Pancreas (tissue), 10 donors: ENCODE measurements at regions of chr4 and their contacts with region 1.

Region 1: DNA sequence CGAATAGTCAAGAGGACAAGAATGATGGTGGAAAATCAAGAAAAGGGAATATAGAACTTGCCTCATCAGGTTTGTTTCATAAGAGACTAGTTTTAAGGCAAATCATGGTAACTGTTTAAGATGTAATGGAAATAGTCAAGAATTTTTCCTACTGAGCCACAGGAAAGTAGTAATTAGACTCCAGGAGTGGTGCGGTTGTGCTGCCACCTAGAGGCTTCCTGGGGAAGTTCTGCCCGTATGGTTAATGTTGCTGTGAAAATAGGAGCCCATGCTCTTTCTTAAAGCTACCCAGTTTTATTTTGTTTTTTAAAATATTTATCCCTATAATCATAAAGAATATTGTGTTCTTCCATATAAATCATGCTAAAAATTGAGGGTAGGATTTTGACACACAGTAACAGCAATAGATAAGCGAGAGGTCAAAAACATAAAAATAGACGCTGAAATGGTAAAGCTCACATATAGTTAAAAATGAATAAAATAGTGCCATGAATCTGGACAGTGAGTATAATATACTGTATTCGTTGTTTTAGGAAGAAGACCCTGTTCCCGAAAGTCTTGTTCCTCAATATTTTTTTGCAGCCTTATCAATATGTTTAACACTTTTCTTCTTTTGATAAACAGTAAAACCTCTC is 87.0 kb downstream of the PHOX2B start:
- DNase-seq: peak in 5 of 6 donors; percentile 18 to 74 (median 45)
- ATAC-seq: peak; percentile 50 to 92 (median 89)
- H3K4me3 ChIP-seq: no peak overlapping the region
- H3K27ac ChIP-seq: no peak overlapping the region
- H3K4me1 ChIP-seq: no peaks in the 10 kb centered on the region
- H3K27me3 ChIP-seq: peaks cover 0 to 6% (median 0%) of the 10 kb centered on the region in 4 donors
- CTCF ChIP-seq: peak; percentile 87 to 95 (median 92)

Region 2: GRCh38 chr4:41281038-41281634 is 380.4 kb before region 1 on chr4:
- intact Hi-C with region 1: loop called in 2 of 3 experiments (anchors 5 to 10 kb)
- DNase-seq: peak in 3 of 6 donors; percentile 25 to 50 (median 26)
- ATAC-seq: peak; percentile 91 to 99 (median 98)
- H3K4me3 ChIP-seq: no peak overlapping the region
- H3K27ac ChIP-seq: no peak overlapping the region
- H3K4me1 ChIP-seq: no peaks in the 10 kb centered on the region
- H3K27me3 ChIP-seq: no peaks in the 10 kb centered on the region
- CTCF ChIP-seq: peak; percentile 55 to 80 (median 66)

Region 3: DNA sequence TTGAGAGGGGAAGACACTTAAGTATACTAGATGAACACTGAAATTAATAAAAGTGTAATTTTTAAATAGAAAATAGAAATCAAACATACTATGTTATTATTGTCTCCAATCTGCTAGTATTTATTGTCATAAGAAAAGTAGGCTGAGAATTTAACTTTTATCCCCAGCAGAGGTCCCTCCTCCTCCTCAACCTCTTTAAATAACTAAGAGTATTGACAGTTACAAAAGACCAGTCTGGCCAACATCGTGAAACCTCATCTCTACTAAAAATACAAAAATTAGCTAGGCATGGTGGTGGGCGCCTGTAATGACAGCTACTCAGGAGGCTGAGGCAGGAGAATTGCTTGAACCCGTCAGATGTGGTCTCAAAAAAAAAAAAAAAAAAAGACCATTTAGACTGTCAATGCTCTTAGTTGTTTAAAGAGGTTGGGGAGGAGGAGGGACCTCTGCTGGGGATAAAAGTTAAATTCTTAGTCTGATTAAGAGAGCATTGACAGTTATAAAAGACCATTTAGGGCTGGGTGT is 333.0 kb after region 1 on chr4:
- intact Hi-C with region 1: no loop called
- DNase-seq: no peak
- ATAC-seq: no peak
- H3K4me3 ChIP-seq: no peak overlapping the region
- H3K27ac ChIP-seq: no peak overlapping the region
- H3K4me1 ChIP-seq: peaks cover 8 to 23% (median 18%) of the 10 kb centered on the region in 3 donors
- H3K27me3 ChIP-seq: no peaks in the 10 kb centered on the region
- CTCF ChIP-seq: no peak